ENCODE measurements at regions of chr15 and their contacts with region 1.

Region 1: GRCh38 chr15:59492389-59493377 is 54.7 kb downstream of the FAM81A start:
- DNase-seq: peak; percentile 70
- H3K4me3 Mint-ChIP-seq: no peak overlapping the region
- H3K27ac Mint-ChIP-seq: no peak overlapping the region
- H3K4me1 Mint-ChIP-seq: peaks cover 11% of the 10 kb centered on the region
- H3K27me3 Mint-ChIP-seq: no peaks in the 10 kb centered on the region
- CTCF ChIP-seq: peak; percentile 79

Region 2: DNA sequence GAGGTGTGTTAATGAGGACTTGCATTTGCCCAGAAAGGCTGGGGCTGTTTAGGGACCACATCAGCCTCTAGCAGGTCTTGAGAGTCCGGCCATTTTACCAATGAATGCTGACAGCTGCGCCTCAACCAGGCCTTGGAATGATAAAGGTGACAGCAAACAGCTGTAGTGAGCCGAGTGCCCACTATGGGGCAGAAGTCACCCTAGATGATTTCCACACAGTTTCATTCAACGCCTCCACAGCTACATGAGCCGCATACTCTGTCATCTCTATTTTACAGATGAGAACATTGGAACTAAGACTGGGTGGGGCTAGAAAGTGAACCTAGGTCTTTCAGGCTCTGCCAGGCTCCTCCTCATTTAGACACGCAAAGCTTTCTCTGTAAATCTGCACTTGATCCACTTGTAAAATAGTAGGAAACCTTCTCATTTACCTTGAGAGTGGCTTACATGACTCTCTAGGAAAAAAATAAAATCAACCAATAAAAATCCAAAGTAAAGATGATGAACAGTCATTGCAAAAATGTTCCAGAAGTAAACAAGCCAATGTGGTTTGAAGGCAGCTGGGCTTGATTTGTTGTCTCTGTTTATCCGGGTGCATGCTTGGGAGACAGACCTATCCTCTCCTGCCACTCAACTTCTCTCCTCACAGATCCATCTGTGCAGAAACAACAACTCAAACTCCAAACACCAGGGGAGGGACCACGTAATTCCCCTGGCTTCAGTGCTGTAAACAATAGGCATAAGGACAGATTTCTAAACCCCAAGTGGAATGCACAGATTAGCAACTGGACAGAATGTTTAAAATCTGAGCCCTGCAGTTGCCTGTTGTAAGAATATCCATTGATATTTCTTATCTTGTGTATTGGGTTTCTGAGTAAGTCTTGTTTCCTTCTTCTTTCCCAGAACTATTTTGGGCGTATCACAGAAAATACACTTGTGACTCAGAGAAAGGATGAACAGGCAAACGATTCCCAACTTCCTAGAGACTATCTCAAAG is 317.6 kb before region 1 on chr15:
- CTCF ChIA-PET with region 1: interaction called, 8 read pairs
- intact Hi-C with region 1: loop called (anchors 5 kb)
- DNase-seq: peak; percentile 57
- H3K4me3 Mint-ChIP-seq: no peak overlapping the region
- H3K27ac Mint-ChIP-seq: peak overlapping the region; percentile 24
- H3K4me1 Mint-ChIP-seq: peaks cover 14% of the 10 kb centered on the region
- H3K27me3 Mint-ChIP-seq: no peaks in the 10 kb centered on the region
- CTCF ChIP-seq: peak; percentile 68

Region 3: DNA sequence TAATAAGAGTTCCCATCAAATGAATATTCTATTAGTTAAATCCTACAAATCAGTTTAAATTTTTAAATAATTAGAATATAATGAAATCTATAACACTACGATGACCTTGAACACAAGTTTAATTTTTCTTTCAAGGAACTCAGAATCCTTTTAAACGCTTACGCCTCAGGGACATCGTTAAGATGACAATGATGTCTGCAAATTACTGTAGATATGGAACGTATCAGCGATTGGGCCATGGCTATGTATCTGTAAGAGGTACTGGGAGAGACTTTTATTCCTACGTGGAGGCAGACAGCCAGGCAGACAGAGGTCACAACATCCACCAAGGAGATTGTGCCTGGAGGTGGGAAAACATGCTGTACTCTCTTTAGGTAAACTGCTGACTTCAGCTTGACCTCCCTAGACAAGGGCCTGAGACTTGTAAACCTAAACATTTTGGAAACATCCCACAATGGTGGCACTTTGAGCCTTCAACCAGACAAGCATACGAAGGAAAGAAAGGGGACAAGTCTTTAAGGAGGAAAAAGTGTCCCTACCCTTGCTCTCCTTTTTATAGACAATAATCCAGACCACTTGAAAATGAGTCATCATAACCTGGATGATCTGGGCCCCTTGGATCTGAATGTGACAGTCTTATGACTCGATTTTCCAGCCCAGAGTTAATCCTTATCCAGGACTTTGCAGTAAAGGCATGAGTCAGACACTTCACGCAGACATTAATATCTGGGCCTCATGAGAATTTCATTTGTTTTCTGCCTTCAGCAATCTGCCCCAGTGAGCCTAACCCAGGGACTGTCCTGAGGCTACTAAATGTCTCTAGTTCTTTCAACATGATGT is 292.8 kb before region 1 on chr15:
- CTCF ChIA-PET with region 1: no interaction called
- intact Hi-C with region 1: no loop called
- DNase-seq: peak; percentile 19
- H3K4me3 Mint-ChIP-seq: peak overlapping the region; percentile 58
- H3K27ac Mint-ChIP-seq: peak overlapping the region; percentile 99
- H3K4me1 Mint-ChIP-seq: peaks cover 13% of the 10 kb centered on the region
- H3K27me3 Mint-ChIP-seq: no peaks in the 10 kb centered on the region
- CTCF ChIP-seq: no peak

Region 4: DNA sequence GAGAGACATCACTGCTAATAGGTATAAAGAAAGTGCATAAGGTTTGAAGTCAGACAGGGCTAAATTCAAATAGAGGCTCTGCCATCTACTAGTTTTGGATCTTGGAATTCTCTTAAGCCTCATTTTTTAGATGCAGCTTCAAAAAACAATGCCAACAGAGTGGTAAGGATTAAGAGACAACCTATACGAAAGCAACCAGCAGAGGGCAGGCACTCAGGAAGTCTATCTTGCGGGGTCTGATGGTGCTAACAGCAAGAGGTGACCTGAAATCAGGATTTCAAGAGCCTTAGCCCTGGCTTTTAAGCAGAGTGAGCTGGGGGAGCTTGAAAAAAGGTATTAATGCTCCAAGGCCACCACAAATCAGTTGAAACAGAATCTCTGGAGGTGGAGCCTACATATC is 245.3 kb before region 1 on chr15:
- CTCF ChIA-PET with region 1: interaction called, 6 read pairs
- intact Hi-C with region 1: loop called (anchors 1 kb)
- DNase-seq: peak; percentile 69
- H3K4me3 Mint-ChIP-seq: no peak overlapping the region
- H3K27ac Mint-ChIP-seq: peak overlapping the region; percentile 69
- H3K4me1 Mint-ChIP-seq: peaks cover 88% of the 10 kb centered on the region
- H3K27me3 Mint-ChIP-seq: no peaks in the 10 kb centered on the region
- CTCF ChIP-seq: peak; percentile 44

Region 5: DNA sequence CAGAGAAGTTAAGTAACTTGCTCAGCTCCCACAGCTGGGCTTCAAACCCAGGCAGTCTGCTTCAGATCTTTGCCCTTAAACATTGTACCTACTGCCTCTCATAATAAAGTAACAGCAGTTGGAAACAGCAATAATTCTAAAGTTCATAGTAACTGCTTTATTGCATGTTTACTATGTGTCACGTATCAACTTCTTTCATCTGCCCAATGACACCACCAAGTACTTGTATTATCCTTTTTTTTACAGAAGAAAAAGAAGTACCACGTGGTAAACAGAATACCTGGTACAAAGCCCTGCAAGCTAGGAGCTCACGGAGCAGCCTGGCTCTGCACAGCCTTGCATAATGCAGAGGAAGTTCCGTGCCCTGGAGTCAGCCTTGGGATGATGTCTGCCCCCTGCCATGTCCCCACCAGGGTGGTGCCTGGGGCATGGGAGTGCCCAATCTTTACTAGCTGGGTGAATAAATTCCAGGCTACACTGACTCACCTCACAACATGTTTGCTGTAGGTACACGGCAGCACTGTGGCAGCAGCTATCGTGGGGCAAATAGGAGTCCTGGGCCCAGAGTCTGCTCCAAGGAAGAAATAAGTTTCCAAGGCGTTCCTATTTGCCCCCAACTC is 208.9 kb before region 1 on chr15:
- CTCF ChIA-PET with region 1: no interaction called
- intact Hi-C with region 1: no loop called
- DNase-seq: peak; percentile 97
- H3K4me3 Mint-ChIP-seq: peak overlapping the region; percentile 60
- H3K27ac Mint-ChIP-seq: peak overlapping the region; percentile 93
- H3K4me1 Mint-ChIP-seq: peaks cover 93% of the 10 kb centered on the region
- H3K27me3 Mint-ChIP-seq: no peaks in the 10 kb centered on the region
- CTCF ChIP-seq: no peak

Region 6: GRCh38 chr15:59410391-59410896 is 82.2 kb before region 1 on chr15:
- CTCF ChIA-PET with region 1: interaction called, 5 read pairs
- intact Hi-C with region 1: loop called (anchors 5 kb)
- DNase-seq: peak; percentile 73
- H3K4me3 Mint-ChIP-seq: peak overlapping the region; percentile 53
- H3K27ac Mint-ChIP-seq: peak overlapping the region; percentile 71
- H3K4me1 Mint-ChIP-seq: peaks cover 56% of the 10 kb centered on the region
- H3K27me3 Mint-ChIP-seq: no peaks in the 10 kb centered on the region
- CTCF ChIP-seq: no peak

Region 7: DNA sequence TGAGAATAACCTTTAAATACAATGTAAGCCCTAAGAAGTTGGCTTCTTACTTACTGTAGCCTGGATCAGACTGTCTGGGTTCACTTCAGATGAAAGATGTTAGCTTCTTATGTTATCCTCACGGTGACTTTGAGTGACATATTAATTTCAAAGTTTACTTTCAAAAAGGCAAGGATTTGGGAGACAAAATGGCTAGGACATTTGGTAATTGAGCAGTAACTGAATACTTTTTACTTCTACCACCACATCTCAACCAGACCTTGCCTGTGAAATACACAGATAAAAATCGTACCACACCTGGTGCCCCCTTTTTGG is 232.4 kb after region 1 on chr15:
- CTCF ChIA-PET with region 1: no interaction called
- intact Hi-C with region 1: no loop called
- DNase-seq: no peak
- H3K4me3 Mint-ChIP-seq: no peak overlapping the region
- H3K27ac Mint-ChIP-seq: no peak overlapping the region
- H3K4me1 Mint-ChIP-seq: no peaks in the 10 kb centered on the region
- H3K27me3 Mint-ChIP-seq: peaks cover 34% of the 10 kb centered on the region
- CTCF ChIP-seq: peak; percentile 1

Region 8: DNA sequence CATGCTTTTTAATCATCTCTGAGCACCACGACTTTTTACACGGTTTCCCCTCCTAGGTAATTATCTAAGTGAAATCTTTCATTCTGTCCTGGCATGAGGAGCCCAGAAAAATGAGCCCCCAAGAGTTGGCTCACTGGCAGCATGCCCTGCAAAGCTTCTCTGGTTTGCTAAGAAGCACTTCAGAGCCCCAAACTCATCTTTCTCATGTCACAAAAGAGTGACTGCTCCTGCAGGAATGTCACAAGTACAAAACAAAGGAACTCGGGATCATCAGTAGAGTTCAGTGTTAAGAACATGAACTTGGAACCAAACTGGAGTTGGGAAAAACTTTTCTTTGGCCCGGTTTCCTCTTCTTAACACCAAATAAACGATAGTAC is 635.3 kb after region 1 on chr15:
- CTCF ChIA-PET with region 1: no interaction called
- intact Hi-C with region 1: no loop called
- DNase-seq: no peak
- H3K4me3 Mint-ChIP-seq: peak overlapping the region; percentile 85
- H3K27ac Mint-ChIP-seq: peak overlapping the region; percentile 73
- H3K4me1 Mint-ChIP-seq: peaks cover 24% of the 10 kb centered on the region
- H3K27me3 Mint-ChIP-seq: peaks cover 15% of the 10 kb centered on the region
- CTCF ChIP-seq: no peak

Measured in Calu3 (cell line).